ENCODE measurements at regions of chr12 and their contacts with region 1.

Region 1: GRCh38 chr12:817941-818600 is 65.7 kb downstream of the WNK1 start:
- DNase-seq: no peak
- H3K4me3 ChIP-seq: no peak overlapping the region
- H3K27ac ChIP-seq: no peak overlapping the region
- H3K4me1 ChIP-seq: peaks cover 12% of the 10 kb centered on the region
- H3K27me3 ChIP-seq: no peaks in the 10 kb centered on the region
- CTCF ChIP-seq: no peak

Region 2: DNA sequence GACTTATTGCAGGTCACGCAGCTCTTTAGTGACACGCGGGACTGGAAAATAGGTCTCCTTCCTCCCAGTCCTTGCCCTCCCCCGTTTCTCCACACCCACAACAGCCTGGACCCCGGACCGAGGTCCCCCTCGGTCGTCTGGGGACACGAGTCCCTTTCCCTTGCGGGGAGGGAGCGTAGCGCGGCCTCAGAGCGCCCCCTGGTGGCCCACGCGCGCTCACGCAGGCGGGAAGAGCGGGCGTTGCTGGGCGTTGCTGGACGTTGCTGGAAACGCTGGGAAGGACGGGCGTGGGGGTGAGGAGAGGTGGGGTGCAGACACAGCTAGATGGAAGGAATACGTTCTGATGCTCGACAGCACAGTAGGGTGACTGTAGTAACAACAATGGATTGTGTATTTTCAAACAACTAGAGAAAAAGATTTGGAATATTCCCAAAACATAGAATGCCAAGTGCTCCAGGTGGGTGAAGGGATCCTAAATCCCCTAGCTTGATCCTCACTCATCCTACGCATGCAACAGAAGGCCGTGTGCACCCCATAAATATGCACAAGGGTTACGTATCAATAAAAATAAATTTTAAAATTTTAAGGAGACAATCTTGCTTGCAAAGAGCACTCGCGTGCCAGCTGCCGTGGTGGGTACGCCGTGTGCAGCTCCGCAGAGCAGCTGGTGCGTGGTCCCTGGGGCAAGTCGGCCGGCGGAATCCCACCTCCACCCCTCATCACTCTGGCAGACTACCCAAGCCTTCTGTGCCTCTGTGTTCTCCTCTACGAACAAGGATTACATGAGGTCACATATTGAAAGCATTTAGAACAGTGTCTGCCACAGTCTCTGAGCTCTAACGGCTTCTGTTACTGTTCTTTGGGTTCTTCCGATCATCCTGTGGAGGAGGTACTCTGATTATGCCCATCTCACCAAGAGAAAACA is 270.9 kb before region 1 on chr12:
- CTCF ChIA-PET with region 1: no interaction called
- dilution Hi-C with region 1: no loop called
- in situ Hi-C with region 1: no loop called
- intact Hi-C with region 1: no loop called
- DNase-seq: peak; percentile 27
- H3K4me3 ChIP-seq: no peak overlapping the region
- H3K27ac ChIP-seq: no peak overlapping the region
- H3K4me1 ChIP-seq: no peaks in the 10 kb centered on the region
- H3K27me3 ChIP-seq: no peaks in the 10 kb centered on the region
- CTCF ChIP-seq: peak; percentile 77 to 99

Region 3: DNA sequence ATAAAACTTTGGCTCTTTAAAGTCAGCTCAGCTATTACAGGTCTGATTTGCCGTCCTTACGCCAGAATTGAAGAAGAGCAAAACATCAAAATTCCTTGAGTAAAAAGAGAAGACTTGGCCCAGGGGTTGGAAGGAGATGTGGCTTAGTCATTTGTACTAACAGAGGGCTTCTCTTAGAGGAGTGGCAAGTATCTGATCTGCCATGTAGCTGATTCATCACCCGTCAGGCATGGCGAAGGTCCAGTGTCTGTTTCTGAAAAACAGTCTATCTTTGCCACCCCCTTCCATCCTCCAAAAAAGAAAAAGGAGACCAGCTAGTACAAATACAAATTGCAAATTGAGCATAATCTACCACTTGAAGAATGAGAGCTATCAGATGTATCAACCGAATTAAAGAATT is 39.5 kb after region 1 on chr12:
- CTCF ChIA-PET with region 1: no interaction called
- dilution Hi-C with region 1: no loop called
- in situ Hi-C with region 1: no loop called
- intact Hi-C with region 1: loop called (anchors 2 kb)
- DNase-seq: peak; percentile 83
- H3K4me3 ChIP-seq: no peak overlapping the region
- H3K27ac ChIP-seq: peak overlapping the region; percentile 83
- H3K4me1 ChIP-seq: peaks cover 23% of the 10 kb centered on the region
- H3K27me3 ChIP-seq: no peaks in the 10 kb centered on the region
- CTCF ChIP-seq: no peak

Measured in mammary epithelial cell (primary cell).